Mammary epithelial cell (primary cell): ENCODE measurements at regions of chr16 and their contacts with region 1.

Region 1: GRCh38 chr16:78925083-78925767 is 675.3 kb downstream of the MAF start:
- DNase-seq: no peak
- H3K4me3 ChIP-seq: no peak overlapping the region
- H3K27ac ChIP-seq: no peak overlapping the region
- H3K4me1 ChIP-seq: no peaks in the 10 kb centered on the region
- H3K27me3 ChIP-seq: peaks cover 2% of the 10 kb centered on the region
- CTCF ChIP-seq: peak; percentile 46 to 58

Region 2: DNA sequence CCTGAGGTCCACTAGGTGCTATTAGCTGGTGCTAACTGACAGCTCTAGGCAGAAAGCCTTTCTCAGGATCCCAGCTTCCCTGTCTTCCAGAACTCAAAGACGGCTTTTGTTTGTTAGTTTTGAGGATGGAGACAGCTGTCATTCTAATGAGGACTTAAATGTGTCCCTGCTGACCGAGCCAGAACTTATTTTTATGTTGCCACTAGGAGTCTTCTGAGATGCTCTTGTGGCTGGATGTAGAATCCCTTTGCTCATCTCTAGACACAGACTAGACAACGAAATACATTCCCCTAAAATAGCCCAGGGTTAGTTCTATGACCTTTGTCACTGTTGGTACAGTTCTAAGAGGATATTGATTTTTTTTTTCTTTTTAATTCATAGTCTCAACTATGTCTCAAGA is 36.8 kb before region 1 on chr16:
- CTCF ChIA-PET with region 1: no interaction called
- dilution Hi-C with region 1: loop called (anchors 5 kb)
- in situ Hi-C with region 1: no loop called
- intact Hi-C with region 1: no loop called
- DNase-seq: no peak
- H3K4me3 ChIP-seq: no peak overlapping the region
- H3K27ac ChIP-seq: no peak overlapping the region
- H3K4me1 ChIP-seq: no peaks in the 10 kb centered on the region
- H3K27me3 ChIP-seq: no peaks in the 10 kb centered on the region
- CTCF ChIP-seq: no peak

Region 3: GRCh38 chr16:79047229-79047983 is 122.2 kb after region 1 on chr16:
- CTCF ChIA-PET with region 1: no interaction called
- dilution Hi-C with region 1: loop called (anchors 10 kb)
- in situ Hi-C with region 1: no loop called
- intact Hi-C with region 1: loop called (anchors 10 kb)
- DNase-seq: no peak
- H3K4me3 ChIP-seq: no peak overlapping the region
- H3K27ac ChIP-seq: no peak overlapping the region
- H3K4me1 ChIP-seq: peaks cover 16% of the 10 kb centered on the region
- H3K27me3 ChIP-seq: no peaks in the 10 kb centered on the region
- CTCF ChIP-seq: peak; percentile 48 to 63